Activated naive CD4-positive, alpha-beta T cell treated with anti-CD3 and anti-CD28 coated beads, Interleukin-2, amount 10 ng/mL, durations not matched to agents 7 days and 5 days (primary cell): ENCODE measurements at regions of chr6 and their contacts with region 1.

Region 1: DNA sequence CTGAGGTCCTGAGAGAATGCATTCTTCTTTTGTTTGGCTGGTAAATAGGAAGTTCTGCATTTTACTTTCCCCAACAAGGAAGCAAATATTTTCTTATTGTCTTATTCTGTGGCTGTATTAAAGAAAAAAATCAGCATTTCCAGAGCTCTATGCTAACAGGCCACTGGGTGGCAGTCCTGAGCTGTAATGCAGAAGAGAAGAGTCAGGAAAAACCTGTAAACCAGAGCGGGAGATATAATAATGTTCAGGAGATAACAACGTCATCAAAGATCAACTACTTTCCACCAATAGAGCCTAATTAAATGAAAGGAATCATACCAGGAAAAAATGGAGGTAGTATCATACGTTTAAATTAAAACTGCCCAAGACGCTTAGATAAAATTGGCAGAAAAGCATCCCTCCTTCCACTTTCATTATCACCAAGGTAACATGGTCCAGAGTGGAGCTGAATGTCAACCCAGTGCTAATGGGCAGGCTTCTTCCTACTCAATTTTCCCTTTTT is 55.6 kb upstream of the CARMIL1 start:
- DNase-seq: peak; percentile 73
- H3K4me3 Mint-ChIP-seq: peak overlapping the region; percentile 31
- H3K27ac Mint-ChIP-seq: no peak overlapping the region
- H3K4me1 Mint-ChIP-seq: peaks cover 13% of the 10 kb centered on the region
- H3K27me3 Mint-ChIP-seq: peaks cover 6% of the 10 kb centered on the region

Region 2: GRCh38 chr6:25490018-25490801 is 266.7 kb after region 1 on chr6:
- CTCF ChIA-PET with region 1: interaction called, 23 read pairs
- DNase-seq: peak; percentile 81
- H3K4me3 Mint-ChIP-seq: no peak overlapping the region
- H3K27ac Mint-ChIP-seq: no peak overlapping the region
- H3K4me1 Mint-ChIP-seq: peaks cover 7% of the 10 kb centered on the region
- H3K27me3 Mint-ChIP-seq: no peaks in the 10 kb centered on the region

Region 3: DNA sequence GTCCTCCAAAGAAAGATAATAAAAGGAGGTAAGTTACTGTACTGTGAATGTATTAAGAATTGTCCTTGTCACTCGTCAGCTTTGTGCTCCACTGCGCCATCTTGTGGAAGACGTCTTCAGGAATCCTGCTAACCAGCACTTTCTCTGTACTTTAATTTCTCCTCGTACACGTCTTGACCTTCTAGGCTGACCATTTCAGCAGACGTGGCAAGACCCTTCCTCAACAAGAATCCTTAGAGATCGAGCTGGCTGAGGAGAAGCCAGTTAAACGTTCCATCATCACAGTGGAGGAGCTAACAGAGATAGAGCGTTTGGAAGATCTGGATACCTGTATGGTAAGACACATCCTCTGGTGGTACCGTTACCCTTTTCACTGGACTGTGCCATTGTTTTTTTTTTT is 333.0 kb after region 1 on chr6:
- CTCF ChIA-PET with region 1: interaction called, 19 read pairs
- DNase-seq: peak; percentile 87
- H3K4me3 Mint-ChIP-seq: no peak overlapping the region
- H3K27ac Mint-ChIP-seq: no peak overlapping the region
- H3K4me1 Mint-ChIP-seq: no peaks in the 10 kb centered on the region
- H3K27me3 Mint-ChIP-seq: no peaks in the 10 kb centered on the region

Region 4: GRCh38 chr6:25601800-25602673 is 378.5 kb after region 1 on chr6:
- CTCF ChIA-PET with region 1: interaction called, 12 read pairs
- DNase-seq: no peak
- H3K4me3 Mint-ChIP-seq: no peak overlapping the region
- H3K27ac Mint-ChIP-seq: no peak overlapping the region
- H3K4me1 Mint-ChIP-seq: peaks cover 5% of the 10 kb centered on the region
- H3K27me3 Mint-ChIP-seq: no peaks in the 10 kb centered on the region

Region 5: DNA sequence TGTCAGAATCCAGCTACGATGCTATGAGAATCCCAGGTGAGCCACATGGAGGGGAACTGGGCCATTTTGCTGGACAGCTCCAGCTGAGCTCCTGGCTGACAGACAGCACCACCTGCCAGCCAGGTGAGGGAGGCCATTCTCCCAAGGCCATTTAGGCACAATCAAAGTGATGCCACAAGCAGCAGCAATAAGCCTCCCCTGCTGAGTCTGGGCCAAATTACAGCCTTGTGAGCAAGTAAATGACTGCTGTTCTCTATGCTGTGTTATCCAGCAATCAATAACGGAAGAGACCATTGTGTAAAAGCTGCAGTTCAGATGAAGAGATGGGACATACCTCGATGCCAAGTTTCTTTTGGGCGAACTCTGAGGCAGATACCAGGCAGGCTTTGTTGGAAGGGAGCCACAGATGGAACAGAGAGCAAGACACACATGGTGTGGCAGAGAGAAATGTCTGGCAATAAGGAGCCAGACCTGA is 414.5 kb after region 1 on chr6:
- CTCF ChIA-PET with region 1: no interaction called
- DNase-seq: no peak
- H3K4me3 Mint-ChIP-seq: no peak overlapping the region
- H3K27ac Mint-ChIP-seq: no peak overlapping the region
- H3K4me1 Mint-ChIP-seq: no peaks in the 10 kb centered on the region
- H3K27me3 Mint-ChIP-seq: peaks cover 11% of the 10 kb centered on the region

Region 6: DNA sequence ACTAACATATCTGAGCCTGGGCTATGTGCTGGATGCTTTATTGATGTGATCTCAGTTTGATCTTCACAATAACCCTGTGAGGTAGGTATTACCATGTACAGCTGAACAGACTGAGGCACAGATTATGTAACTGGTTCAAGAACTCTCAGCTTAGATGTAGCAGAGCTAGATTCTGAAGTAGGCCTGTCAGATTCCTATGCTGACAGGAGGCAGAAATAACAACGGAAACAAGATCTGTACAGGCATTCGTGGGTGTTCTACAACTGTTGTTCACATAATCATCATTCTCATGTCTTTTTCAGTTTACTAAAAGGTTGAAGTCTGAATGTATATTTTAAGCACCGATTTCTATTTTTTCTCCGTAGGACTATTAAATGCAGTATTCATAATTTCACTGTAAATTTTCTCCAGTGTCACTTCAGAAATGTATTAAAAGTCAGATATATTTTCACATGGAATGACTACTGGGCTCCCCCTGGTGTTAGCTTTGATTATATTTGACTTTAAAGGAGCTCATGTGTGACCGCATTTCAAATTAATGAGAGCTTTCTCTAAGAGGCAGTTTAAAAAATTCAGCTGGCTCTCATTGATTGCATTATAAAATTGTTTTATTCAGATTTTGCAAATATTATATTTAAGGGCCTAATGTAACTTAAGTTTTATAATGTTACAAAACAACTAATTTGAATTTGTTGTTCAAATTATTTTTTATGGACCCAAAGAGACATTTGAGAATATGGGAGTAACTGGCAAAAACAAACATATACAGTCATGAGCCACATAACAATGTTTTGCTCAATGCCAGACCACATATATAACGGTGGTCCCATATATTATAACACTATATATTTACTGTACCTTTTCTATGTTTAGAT is 494.6 kb after region 1 on chr6:
- CTCF ChIA-PET with region 1: interaction called, 11 read pairs
- DNase-seq: no peak
- H3K4me3 Mint-ChIP-seq: no peak overlapping the region
- H3K27ac Mint-ChIP-seq: no peak overlapping the region
- H3K4me1 Mint-ChIP-seq: no peaks in the 10 kb centered on the region
- H3K27me3 Mint-ChIP-seq: peaks cover 14% of the 10 kb centered on the region